Heart left ventricle (tissue), 16 donors: ENCODE measurements at regions of chr20 and their contacts with region 1.

Region 1: GRCh38 chr20:43456809-43457639 is 672 bp upstream of the SRSF6 start:
- DNase-seq: peak; percentile 90 to 93 (median 92)
- ATAC-seq: peak; percentile 88 to 94 (median 89)
- H3K4me3 ChIP-seq: peak overlapping the region; percentile 66 to 96 (median 89)
- H3K27ac ChIP-seq: peak overlapping the region; percentile 97 to 100 (median 100)
- H3K4me1 ChIP-seq: peaks cover 0 to 30% (median 22%) of the 10 kb centered on the region in 12 donors
- H3K27me3 ChIP-seq: no peaks in the 10 kb centered on the region
- CTCF ChIP-seq: no peak
- POLR2A ChIP-seq: no peak

Region 2: GRCh38 chr20:43514062-43514999 is 57.3 kb after region 1 on chr20:
- intact Hi-C with region 1: loop called in 3 of 10 experiments (anchors 5 to 10 kb)
- DNase-seq: peak; percentile 95 to 99 (median 97)
- ATAC-seq: peak; percentile 95 to 98 (median 96)
- H3K4me3 ChIP-seq: peak overlapping the region; percentile 30 to 84 (median 62)
- H3K27ac ChIP-seq: peak overlapping the region in 10 of 12 donors; percentile 2 to 82 (median 70)
- H3K4me1 ChIP-seq: peaks cover 0 to 23% (median 3%) of the 10 kb centered on the region in 12 donors
- H3K27me3 ChIP-seq: no peaks in the 10 kb centered on the region
- CTCF ChIP-seq: peak in 7 of 12 donors; percentile 6 to 45 (median 14)
- POLR2A ChIP-seq: peak in 1 of 2 donors; percentile 15

Region 3: DNA sequence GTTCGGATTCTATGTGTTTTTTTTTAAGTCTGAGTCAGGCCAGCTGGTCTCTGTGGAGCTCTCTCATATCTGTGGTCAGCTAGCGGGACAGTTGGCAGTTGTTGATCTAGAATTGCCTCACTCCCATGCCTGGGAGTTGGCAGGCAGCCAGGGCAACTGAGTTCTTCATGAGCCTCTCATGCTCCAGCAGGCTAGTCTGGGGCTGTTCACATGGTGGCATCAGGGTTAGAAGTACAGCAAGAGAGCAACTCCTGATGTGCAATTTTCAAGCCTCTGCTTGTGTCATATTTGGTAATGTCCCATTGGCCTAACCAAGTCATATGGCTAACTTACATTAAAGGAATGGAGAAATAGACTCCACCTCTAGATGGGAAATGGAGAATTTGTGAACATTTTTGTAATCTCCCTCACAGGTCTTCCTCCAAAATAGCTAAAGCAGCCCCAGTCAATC is 127.0 kb after region 1 on chr20:
- intact Hi-C with region 1: loop called in 1 of 10 experiments (anchors 10 kb)
- DNase-seq: peak; percentile 32 to 77 (median 54)
- ATAC-seq: peak in 3 of 4 donors; percentile 56 to 72 (median 61)
- H3K4me3 ChIP-seq: no peak overlapping the region
- H3K27ac ChIP-seq: no peak overlapping the region
- H3K4me1 ChIP-seq: peaks cover 0 to 8% (median 0%) of the 10 kb centered on the region in 12 donors
- H3K27me3 ChIP-seq: no peaks in the 10 kb centered on the region
- CTCF ChIP-seq: no peak
- POLR2A ChIP-seq: no peak

Region 4: DNA sequence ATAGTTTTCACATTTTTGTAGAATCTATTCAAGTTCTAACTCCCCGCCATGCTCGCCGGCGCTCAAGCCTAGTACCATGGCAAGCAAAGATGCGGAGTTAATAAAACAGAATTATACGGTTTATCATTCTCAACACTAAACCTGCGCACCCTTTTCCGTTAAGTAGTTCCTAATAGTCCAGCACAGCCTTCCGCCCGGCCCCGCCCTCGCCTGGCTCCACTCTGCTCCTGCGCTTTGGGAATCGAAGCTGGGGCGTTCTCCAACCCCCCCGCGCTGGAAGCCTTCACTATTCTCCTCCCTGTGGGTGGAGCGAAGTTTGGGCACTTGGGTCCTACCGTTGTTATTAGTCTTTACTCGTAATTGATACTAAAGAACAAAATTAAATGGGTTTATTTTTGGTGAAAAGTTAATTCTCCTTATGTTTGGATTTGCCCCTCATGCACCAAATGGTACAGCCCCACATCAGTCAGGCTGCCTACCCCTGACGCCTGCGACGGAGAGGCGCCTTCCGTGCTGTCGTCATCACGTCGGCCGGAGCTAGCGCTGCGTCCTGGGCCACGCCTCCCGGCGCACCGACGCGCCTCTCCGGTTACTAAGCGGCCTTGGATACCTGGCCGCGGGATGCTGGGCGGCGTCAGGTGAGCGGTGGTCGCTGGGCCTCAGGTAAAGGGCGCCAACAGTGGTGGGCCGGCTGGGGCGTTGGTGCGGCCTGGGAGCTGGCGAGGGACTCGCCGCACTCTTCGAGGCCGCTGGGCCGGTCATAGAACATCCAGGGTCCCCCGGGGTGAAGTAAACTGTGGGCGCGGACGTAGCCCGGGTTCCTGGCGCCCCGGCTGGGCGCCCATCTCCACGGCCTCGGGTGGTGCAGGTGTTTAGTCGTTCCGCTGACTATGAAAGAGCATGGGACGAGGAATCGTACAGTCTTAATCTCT is 133.6 kb after region 1 on chr20 and contains the start of gene IFT52:
- intact Hi-C with region 1: loop called in 4 of 10 experiments (anchors 2 to 10 kb)
- DNase-seq: peak; percentile 95
- ATAC-seq: peak; percentile 99 to 100 (median 100)
- H3K4me3 ChIP-seq: peak within 1 kb of the TSS; percentile 68 to 99 (median 85)
- H3K27ac ChIP-seq: peak within 1 kb of the TSS; percentile 66 to 94 (median 88)
- H3K4me1 ChIP-seq: peaks cover 3 to 22% (median 13%) of the 10 kb centered on the region in 12 donors
- H3K27me3 ChIP-seq: no peaks in the 10 kb centered on the region
- CTCF ChIP-seq: no peak
- POLR2A ChIP-seq: peak in 1 of 2 donors; percentile 49
- total RNA-seq, gene IFT52: 4.2 to 15.5 (median 5.7) TPM

Region 5: DNA sequence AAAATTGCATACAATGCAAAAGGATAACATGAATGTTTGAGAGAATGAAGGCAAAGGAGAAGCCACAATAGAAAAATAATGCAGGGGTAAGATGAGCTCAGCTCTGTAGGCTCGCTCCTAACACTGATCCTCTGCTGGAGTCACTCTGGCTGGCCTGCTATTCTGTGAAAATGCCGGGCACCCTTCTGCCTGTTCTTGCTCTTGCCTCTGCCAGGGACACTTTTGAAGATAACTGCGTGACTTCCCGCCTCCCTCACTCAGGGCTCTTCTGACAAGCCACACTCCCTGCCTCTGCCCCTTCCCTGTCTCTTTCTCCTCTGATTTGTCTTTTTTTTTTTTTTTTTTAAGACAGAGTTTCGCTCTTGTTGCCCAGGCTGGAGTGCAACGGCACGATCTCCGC is 174.6 kb after region 1 on chr20:
- intact Hi-C with region 1: loop called in 1 of 10 experiments (anchors 10 kb)
- DNase-seq: peak in 2 of 5 donors; percentile 10 to 27
- ATAC-seq: peak; percentile 68 to 87 (median 77)
- H3K4me3 ChIP-seq: no peak overlapping the region
- H3K27ac ChIP-seq: no peak overlapping the region
- H3K4me1 ChIP-seq: peaks cover 0 to 5% (median 0%) of the 10 kb centered on the region in 12 donors
- H3K27me3 ChIP-seq: no peaks in the 10 kb centered on the region
- CTCF ChIP-seq: no peak
- POLR2A ChIP-seq: no peak